ENCODE measurements at regions of chr1 and their contacts with region 1.

Region 1: DNA sequence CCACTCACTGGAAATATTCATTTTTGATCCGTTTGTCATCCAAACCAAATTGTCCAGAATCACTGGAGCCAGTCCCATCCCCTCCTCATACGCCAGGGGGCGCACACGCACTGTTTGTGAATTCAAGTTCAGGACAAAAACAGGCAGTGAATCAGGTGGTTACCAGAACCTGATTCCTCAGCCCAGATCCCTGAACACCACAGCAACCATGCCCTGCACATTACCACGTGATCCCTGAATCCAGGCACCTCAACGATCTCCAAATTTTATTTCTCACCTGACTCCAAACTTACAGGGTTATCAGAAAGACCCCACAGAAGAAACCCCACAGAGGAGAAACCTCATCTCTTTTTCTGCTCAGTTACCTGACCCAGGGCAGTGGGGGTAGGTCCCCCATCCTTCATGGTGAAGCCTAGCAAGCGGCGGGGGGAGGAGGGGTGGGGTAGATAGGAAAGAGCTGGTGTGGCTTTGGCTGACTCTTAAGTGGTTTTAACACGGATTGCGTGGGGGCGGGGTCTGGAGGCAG is 1.4 kb upstream of the PTPRF start:
- DNase-seq: peak; percentile 64
- H3K4me3 Mint-ChIP-seq: peak overlapping the region; percentile 34
- H3K27ac Mint-ChIP-seq: no peak overlapping the region
- H3K4me1 Mint-ChIP-seq: peaks cover 21% of the 10 kb centered on the region
- H3K27me3 Mint-ChIP-seq: peaks cover 41% of the 10 kb centered on the region

Region 2: GRCh38 chr1:43565600-43566360 is 36.5 kb after region 1 on chr1:
- intact Hi-C with region 1: loop called (anchors 1 kb)
- DNase-seq: peak; percentile 55
- H3K4me3 Mint-ChIP-seq: peak overlapping the region; percentile 74
- H3K27ac Mint-ChIP-seq: no peak overlapping the region
- H3K4me1 Mint-ChIP-seq: peaks cover 12% of the 10 kb centered on the region
- H3K27me3 Mint-ChIP-seq: peaks cover 1% of the 10 kb centered on the region

Region 3: GRCh38 chr1:43650310-43651085 is 121.2 kb after region 1 on chr1:
- intact Hi-C with region 1: loop called (anchors 1 kb)
- DNase-seq: peak; percentile 89
- H3K4me3 Mint-ChIP-seq: peak overlapping the region; percentile 98
- H3K27ac Mint-ChIP-seq: peak overlapping the region; percentile 98
- H3K4me1 Mint-ChIP-seq: peaks cover 27% of the 10 kb centered on the region
- H3K27me3 Mint-ChIP-seq: peaks cover under 1% of the 10 kb centered on the region

Region 4: DNA sequence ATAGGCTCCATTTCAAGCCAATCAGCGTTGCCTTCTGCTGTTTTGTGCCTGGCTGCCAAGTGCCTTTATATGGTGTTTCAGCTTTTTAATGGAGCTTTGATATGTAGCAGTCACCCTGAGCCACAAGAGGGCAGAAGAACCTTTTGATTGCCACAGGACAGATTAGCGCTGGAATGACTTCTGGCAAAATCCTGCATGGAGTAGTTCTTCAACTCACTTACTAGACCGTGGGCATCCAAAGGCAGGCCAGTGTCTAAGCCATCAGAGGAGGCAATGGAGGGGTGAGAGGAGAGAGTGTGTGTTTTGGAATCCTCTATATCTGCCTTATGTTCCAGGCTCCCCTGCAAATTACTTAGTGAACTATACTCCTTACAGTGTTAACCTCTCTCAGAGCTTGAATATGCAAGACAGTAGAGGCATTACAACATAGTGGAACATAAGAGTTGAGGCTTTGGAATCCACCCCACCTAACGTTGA is 234.3 kb after region 1 on chr1:
- intact Hi-C with region 1: loop called (anchors 1 kb)
- DNase-seq: peak; percentile 25
- H3K4me3 Mint-ChIP-seq: no peak overlapping the region
- H3K27ac Mint-ChIP-seq: no peak overlapping the region
- H3K4me1 Mint-ChIP-seq: peaks cover 5% of the 10 kb centered on the region
- H3K27me3 Mint-ChIP-seq: no peaks in the 10 kb centered on the region

Region 5: DNA sequence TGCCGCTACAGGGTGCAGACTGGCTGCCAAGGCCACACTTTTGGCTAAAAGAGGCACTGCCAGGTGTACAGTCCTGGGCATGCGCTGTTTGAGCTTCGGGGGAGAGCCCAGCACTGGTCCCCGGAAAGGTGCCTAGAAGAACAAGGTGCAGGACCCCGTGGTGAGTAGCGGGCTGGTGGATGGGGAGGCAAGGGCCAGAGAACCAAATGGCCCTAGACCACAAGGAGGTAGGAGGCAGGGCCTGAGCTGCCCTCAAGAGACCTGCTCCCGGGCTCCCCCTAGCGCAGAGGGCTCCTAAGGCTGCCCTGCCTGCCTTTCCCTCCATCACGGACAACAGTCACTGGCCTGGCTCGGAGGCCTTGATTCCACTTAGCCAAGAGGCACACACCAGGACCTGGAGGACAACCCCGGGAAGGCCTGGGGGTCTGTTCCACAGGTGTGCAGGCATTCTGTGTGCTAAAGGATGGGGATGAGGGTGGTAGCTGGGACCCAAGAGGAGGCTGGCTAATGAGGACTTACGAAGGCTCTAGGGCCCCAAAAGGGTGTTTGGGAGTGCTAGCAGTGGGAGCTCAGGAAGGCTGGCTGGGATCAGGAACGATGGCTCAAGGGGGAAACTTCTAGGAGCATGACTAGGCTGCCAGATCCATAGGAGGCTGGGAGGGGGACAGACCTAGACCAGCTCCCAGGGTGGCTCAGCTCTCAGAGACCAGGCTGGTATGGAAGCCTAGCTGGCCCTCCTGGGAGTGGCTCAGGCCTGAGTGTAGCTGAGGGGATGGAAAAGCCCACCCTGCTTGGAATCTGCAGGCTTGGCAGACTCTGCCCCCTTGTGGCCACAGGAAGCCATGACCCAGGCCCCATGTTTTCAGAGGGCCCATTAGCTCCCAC is 405.1 kb after region 1 on chr1:
- intact Hi-C with region 1: loop called (anchors 1 kb)
- DNase-seq: peak; percentile 32
- H3K4me3 Mint-ChIP-seq: no peak overlapping the region
- H3K27ac Mint-ChIP-seq: no peak overlapping the region
- H3K4me1 Mint-ChIP-seq: peaks cover 8% of the 10 kb centered on the region
- H3K27me3 Mint-ChIP-seq: peaks cover 14% of the 10 kb centered on the region

Region 6: DNA sequence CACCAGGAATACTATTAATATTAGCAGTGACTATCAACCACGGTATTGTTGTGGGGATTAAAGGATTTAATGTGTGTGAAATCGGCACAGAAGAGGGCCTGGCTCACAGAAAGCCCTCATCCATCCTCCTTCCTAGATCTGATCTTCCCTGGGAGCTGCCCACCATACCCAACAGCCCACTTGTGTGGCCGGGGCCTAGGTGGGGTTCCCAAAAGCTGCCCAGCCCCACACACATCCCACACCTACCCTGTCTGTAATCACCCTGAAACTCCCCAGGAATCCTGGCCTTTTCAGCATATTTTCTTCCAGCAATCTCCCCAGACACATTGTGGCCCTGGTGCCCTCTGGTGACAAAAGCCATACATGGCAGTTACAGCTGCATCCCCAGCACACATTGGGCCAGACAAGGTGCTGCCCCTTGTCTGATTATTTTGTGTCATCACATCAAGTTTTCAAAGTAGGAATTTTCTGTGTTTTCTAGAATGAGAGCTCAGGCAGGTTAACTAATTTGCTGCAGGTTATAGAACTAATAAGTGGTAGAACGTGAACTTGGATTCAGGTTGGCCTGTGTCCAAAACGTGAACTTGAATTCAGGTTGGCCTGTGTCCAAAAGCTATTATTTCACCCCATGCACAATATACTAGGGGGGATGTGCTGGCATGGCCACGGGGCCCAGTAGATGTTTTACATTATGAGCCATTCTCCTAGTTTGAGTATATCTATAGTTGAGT is 507.3 kb after region 1 on chr1:
- intact Hi-C with region 1: loop called (anchors 1 kb)
- DNase-seq: peak; percentile 55
- H3K4me3 Mint-ChIP-seq: no peak overlapping the region
- H3K27ac Mint-ChIP-seq: no peak overlapping the region
- H3K4me1 Mint-ChIP-seq: peaks cover 14% of the 10 kb centered on the region
- H3K27me3 Mint-ChIP-seq: peaks cover 10% of the 10 kb centered on the region

Region 7: GRCh38 chr1:44049839-44050238 is 520.6 kb after region 1 on chr1:
- intact Hi-C with region 1: loop called (anchors 1 kb)
- DNase-seq: no peak
- H3K4me3 Mint-ChIP-seq: no peak overlapping the region
- H3K27ac Mint-ChIP-seq: no peak overlapping the region
- H3K4me1 Mint-ChIP-seq: peaks cover 16% of the 10 kb centered on the region
- H3K27me3 Mint-ChIP-seq: peaks cover 3% of the 10 kb centered on the region